ENCODE measurements at regions of chr2 and their contacts with region 1.

Region 1: GRCh38 chr2:6352906-6353515 is 512.7 kb downstream of the CMPK2 start:
- DNase-seq: peak; percentile 22 to 42
- ATAC-seq: peak in 1 of 8 donors; percentile 51
- H3K4me3 ChIP-seq: no peak overlapping the region
- H3K27ac ChIP-seq: no peak overlapping the region
- H3K4me1 ChIP-seq: no peaks in the 10 kb centered on the region
- H3K27me3 ChIP-seq: no peaks in the 10 kb centered on the region
- CTCF ChIP-seq: peak; percentile 33 to 73 (median 65)

Region 2: DNA sequence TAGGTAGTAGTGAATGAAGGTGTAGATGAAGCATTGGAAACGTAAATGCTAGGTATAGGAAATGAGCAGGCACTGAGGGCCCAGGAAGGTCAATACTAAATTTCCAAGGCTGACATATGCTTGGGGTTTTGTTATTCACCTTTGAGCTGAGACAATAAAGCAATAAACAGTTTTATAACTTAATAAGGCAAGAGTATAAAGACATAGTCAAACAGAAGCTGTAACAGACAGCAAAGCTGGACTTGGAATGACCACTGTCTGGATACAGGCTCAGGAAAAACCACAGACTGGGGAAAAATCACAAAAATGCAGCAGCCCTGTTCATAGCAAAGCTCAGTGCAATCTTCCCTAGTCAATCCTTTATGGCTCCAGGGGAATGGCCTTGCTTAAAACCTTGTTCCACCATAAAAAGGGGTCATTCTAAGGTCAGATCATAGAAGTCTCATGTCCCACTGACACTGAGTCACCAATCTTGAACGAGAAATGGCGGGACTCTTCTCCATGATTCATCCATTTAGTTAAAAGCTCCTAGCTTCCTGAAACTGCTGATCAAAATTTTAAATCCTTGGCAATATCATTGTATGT is 19.4 kb after region 1 on chr2:
- intact Hi-C with region 1: no loop called
- DNase-seq: no peak
- ATAC-seq: no peak
- H3K4me3 ChIP-seq: no peak overlapping the region
- H3K27ac ChIP-seq: no peak overlapping the region
- H3K4me1 ChIP-seq: no peaks in the 10 kb centered on the region
- H3K27me3 ChIP-seq: no peaks in the 10 kb centered on the region
- CTCF ChIP-seq: no peak

Region 3: GRCh38 chr2:6412533-6413091 is 59.6 kb after region 1 on chr2:
- intact Hi-C with region 1: no loop called
- DNase-seq: no peak
- ATAC-seq: no peak
- H3K4me3 ChIP-seq: no peak overlapping the region
- H3K27ac ChIP-seq: no peak overlapping the region
- H3K4me1 ChIP-seq: no peaks in the 10 kb centered on the region
- H3K27me3 ChIP-seq: peaks cover 0 to 20% (median 2%) of the 10 kb centered on the region in 7 donors
- CTCF ChIP-seq: no peak

Region 4: GRCh38 chr2:6773007-6773693 is 420.1 kb after region 1 on chr2:
- intact Hi-C with region 1: loop called (anchors 1 to 5 kb)
- DNase-seq: peak; percentile 38 to 70
- ATAC-seq: peak; percentile 76 to 91 (median 88)
- H3K4me3 ChIP-seq: peak overlapping the region in 4 of 10 donors; percentile 1 to 36 (median 14)
- H3K27ac ChIP-seq: no peak overlapping the region
- H3K4me1 ChIP-seq: peaks cover 0 to 12% (median 8%) of the 10 kb centered on the region in 9 donors
- H3K27me3 ChIP-seq: peaks cover 0 to 30% (median 18%) of the 10 kb centered on the region in 7 donors
- CTCF ChIP-seq: peak; percentile 94 to 99 (median 97)